Activated T-helper 1 cell treated with anti-CD3 and anti-CD28 coated beads, Interleukin-12 subunit alpha, Interleukin-12 subunit beta, Interleukin-2, Interleukin-4 antibody, amounts not matched to agents 30 ng/mL and 10 ng/mL and 1 ng/mL, durations not matched to agents 14 hours and 24 hours and 36 hours (primary cell): ENCODE measurements at regions of chr9 and their contacts with region 1.

Region 1: GRCh38 chr9:33225319-33226149 is 14.4 kb upstream of the SPINK4 start:
- DNase-seq: peak; percentile 55
- H3K4me3 Mint-ChIP-seq: no peak overlapping the region
- H3K27ac Mint-ChIP-seq: peak overlapping the region; percentile 70
- H3K4me1 Mint-ChIP-seq: peaks cover 36% of the 10 kb centered on the region
- H3K27me3 Mint-ChIP-seq: no peaks in the 10 kb centered on the region

Region 2: GRCh38 chr9:33130508-33130911 is 95.0 kb before region 1 on chr9:
- intact Hi-C with region 1: loop called (anchors 1 kb)
- DNase-seq: no peak
- H3K4me3 Mint-ChIP-seq: peak overlapping the region; percentile 51
- H3K27ac Mint-ChIP-seq: peak overlapping the region; percentile 93
- H3K4me1 Mint-ChIP-seq: peaks cover 37% of the 10 kb centered on the region
- H3K27me3 Mint-ChIP-seq: no peaks in the 10 kb centered on the region

Region 3: DNA sequence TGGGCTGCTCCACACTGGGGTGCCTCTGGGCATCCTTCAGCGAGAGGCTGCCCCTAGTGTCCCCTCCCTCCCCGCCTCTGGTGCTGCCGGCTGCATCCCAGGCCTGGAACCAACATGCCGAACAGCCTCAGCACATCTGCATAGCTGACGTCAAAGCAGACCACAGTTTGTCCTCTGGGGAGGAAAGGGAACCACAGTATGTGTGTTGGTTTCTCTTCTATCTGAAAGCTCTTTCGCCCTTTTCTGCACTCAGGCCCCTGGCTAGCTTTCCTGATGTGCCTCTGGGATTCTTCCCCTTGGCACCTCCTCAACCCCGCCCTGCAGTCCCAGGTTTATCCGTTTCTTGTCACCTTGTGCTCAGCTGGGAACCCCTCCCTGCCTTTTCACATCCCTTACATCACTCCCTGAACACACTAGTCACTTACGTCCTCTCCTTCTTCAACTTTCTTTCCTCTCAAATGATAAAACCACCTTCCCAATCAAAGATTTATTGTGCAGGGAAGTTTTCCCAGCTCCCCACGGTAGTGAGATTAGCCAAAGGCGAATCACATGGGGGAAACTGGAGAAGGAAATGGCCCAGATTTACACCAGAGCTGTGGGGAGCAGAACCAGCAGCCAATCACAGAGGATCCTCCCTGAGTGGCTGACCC is 22.9 kb before region 1 on chr9:
- intact Hi-C with region 1: loop called (anchors 2 kb)
- DNase-seq: peak; percentile 49
- H3K4me3 Mint-ChIP-seq: no peak overlapping the region
- H3K27ac Mint-ChIP-seq: peak overlapping the region; percentile 38
- H3K4me1 Mint-ChIP-seq: peaks cover 14% of the 10 kb centered on the region
- H3K27me3 Mint-ChIP-seq: peaks cover 6% of the 10 kb centered on the region

Region 4: GRCh38 chr9:33436440-33436839 is 210.9 kb after region 1 on chr9:
- intact Hi-C with region 1: no loop called
- DNase-seq: no peak
- H3K4me3 Mint-ChIP-seq: no peak overlapping the region
- H3K27ac Mint-ChIP-seq: no peak overlapping the region
- H3K4me1 Mint-ChIP-seq: peaks cover 57% of the 10 kb centered on the region
- H3K27me3 Mint-ChIP-seq: no peaks in the 10 kb centered on the region